Esophagus muscularis mucosa (tissue), 4 donors: ENCODE measurements at regions of chr2 and their contacts with region 1.

Region 1: DNA sequence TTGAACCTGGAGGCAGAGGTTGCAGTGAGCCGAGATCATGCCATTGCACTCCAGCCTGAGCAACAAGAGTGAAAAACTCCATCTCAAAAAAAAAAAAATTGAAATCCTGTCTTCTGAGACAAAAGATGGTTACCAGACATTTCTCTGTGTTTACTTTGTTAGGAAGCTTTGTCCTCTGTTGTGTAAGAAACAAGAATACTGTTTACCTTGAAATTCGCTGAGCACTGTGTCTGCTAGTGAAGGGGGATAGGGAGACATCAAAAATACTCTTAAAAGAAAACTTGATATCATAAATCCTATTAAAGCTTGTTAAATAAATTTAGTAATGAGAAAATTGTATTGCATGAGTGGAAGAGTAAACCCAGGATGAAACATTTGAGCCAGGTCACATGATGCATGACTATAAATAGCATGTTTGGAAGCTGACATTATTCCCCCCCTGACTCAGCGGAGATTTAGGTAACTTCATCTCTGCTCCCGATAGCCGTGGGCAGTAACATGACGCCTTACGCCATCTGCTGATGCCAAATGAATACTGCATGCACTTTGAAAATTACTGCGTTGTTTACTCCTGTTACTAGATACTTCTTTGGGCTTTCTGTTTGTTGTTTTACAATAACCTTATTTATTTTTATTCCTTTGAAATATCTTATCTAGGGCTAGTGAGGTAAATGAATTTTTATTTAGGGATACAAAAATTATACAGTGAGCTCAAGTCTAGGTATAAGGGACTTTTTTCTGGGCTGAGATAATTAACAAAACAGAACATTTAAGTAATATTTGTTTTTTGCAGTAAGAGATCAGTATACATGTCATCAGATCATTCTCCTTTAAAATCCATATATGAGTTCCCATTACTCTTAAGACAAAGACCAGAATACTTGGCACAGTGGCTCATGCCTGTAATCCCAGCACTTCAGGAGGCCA is 134.9 kb downstream of the MAP3K20 start:
- DNase-seq: peak; percentile 94
- H3K4me3 ChIP-seq: no peak overlapping the region
- H3K27ac ChIP-seq: peak overlapping the region; percentile 73 to 82 (median 76)
- H3K4me1 ChIP-seq: peaks cover 45 to 83% (median 66%) of the 10 kb centered on the region in 4 donors
- H3K27me3 ChIP-seq: no peaks in the 10 kb centered on the region
- CTCF ChIP-seq: peak; percentile 85 to 96 (median 92)
- EP300 ChIP-seq: no peak
- POLR2A ChIP-seq: no peak

Region 2: DNA sequence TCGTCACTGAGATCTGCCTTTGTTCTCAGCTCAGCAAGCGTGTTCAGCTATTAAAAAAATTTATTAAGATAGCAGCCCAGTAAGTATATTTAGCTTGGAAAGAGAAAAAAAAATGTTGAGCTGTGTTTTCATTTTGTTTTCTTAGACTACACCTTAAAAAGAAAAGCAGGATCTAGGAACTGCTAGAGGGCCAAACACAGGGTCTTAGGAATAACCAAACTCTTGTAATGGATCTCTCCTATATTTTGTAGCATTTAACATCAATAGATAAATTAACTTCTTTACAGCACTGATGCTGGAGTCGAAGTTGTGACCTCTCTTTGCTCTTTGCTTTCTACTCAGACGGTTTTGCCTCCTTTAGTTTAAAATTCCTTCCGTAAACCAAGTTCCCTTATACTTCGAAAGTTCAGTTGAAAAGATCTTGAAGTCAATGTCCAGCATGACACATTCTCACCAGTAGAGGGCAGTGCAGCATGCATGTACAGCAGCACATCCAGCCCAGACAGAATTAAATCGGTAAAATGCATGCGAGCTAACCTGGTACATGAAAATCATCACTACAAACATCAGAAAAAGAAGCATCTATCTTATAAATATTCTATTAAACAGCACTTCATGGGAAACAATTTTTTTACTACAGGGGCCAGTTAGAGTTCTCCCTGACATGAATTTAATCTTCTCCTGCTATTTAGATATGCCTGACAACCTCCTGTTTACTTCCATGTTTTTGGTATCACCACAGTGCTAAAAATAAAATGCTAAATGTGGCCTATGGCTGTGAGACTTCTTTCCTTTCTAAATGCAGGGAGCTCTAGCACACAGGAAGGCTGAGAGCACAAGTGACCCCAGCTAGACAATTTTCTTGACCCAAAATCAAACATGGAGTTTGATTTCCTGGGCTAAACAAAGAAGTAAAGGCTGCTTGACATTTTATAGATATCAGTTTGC is 183.1 kb before region 1 on chr2:
- intact Hi-C with region 1: loop called (anchors 2 kb)
- DNase-seq: peak; percentile 96
- H3K4me3 ChIP-seq: no peak overlapping the region
- H3K27ac ChIP-seq: peak overlapping the region; percentile 54 to 80 (median 74)
- H3K4me1 ChIP-seq: peaks cover 18 to 29% (median 26%) of the 10 kb centered on the region in 4 donors
- H3K27me3 ChIP-seq: no peaks in the 10 kb centered on the region
- CTCF ChIP-seq: peak; percentile 92 to 97 (median 94)
- EP300 ChIP-seq: no peak
- POLR2A ChIP-seq: no peak

Region 3: GRCh38 chr2:173075781-173076580 is 134.6 kb before region 1 on chr2 and contains the start of gene MAP3K20:
- intact Hi-C with region 1: loop called (anchors 1 kb)
- DNase-seq: no peak
- H3K4me3 ChIP-seq: peak within 1 kb of the TSS; percentile 72 to 89 (median 84)
- H3K27ac ChIP-seq: peak within 1 kb of the TSS; percentile 92 to 99 (median 98)
- H3K4me1 ChIP-seq: peaks cover 16 to 58% (median 48%) of the 10 kb centered on the region in 4 donors
- H3K27me3 ChIP-seq: no peaks in the 10 kb centered on the region
- CTCF ChIP-seq: peak; percentile 59 to 71 (median 67)
- EP300 ChIP-seq: no peak
- POLR2A ChIP-seq: peak; percentile 68
- total RNA-seq, gene MAP3K20: 238 to 335 (median 267) TPM

Region 4: GRCh38 chr2:173249661-173250641 is 39.4 kb after region 1 on chr2:
- intact Hi-C with region 1: no loop called
- DNase-seq: no peak
- H3K4me3 ChIP-seq: no peak overlapping the region
- H3K27ac ChIP-seq: peak overlapping the region in 1 of 4 donors; percentile 16
- H3K4me1 ChIP-seq: peaks cover 0 to 20% (median 9%) of the 10 kb centered on the region in 4 donors
- H3K27me3 ChIP-seq: no peaks in the 10 kb centered on the region
- CTCF ChIP-seq: no peak
- EP300 ChIP-seq: no peak
- POLR2A ChIP-seq: no peak

Region 5: DNA sequence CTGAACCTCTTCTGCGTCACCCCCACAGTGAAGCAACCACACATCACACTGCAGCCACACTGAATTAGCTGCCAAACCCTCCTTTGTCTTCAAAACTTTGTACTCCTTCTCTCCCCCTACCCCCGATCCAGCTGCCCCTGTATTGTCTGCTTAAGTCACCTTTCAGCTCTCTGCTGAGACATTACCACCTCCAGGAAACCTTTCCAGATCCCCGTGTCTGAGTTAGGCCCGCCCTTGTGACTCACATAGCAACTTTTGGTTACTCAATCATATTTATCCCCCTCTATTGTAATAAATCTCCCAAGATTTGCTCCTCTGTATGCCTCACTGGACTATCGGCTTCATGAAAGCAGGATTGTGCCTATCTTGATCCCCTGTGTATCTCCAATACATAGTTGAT is 61.3 kb after region 1 on chr2:
- intact Hi-C with region 1: no loop called
- DNase-seq: no peak
- H3K4me3 ChIP-seq: no peak overlapping the region
- H3K27ac ChIP-seq: no peak overlapping the region
- H3K4me1 ChIP-seq: no peaks in the 10 kb centered on the region
- H3K27me3 ChIP-seq: no peaks in the 10 kb centered on the region
- CTCF ChIP-seq: no peak
- EP300 ChIP-seq: no peak
- POLR2A ChIP-seq: no peak

Region 6: GRCh38 chr2:173424886-173425285 is 214.4 kb after region 1 on chr2:
- intact Hi-C with region 1: no loop called
- DNase-seq: no peak
- H3K4me3 ChIP-seq: no peak overlapping the region
- H3K27ac ChIP-seq: no peak overlapping the region
- H3K4me1 ChIP-seq: peaks cover 0 to 11% (median 7%) of the 10 kb centered on the region in 4 donors
- H3K27me3 ChIP-seq: peaks cover 0 to 7% (median 0%) of the 10 kb centered on the region in 4 donors
- CTCF ChIP-seq: no peak
- EP300 ChIP-seq: no peak
- POLR2A ChIP-seq: no peak